GM23248 (cell line): ENCODE measurements at regions of chrX and their contacts with region 1.

Region 1: GRCh38 chrX:134753718-134754008 is 95.4 kb upstream of the PLAC1 start:
- DNase-seq: peak; percentile 59
- H3K4me3 ChIP-seq: peak overlapping the region; percentile 42; the same call in 1 of the 2 replicates
- H3K27ac ChIP-seq: no peak overlapping the region
- H3K4me1 ChIP-seq: no peaks in the 10 kb centered on the region; the same call in 1 of the 2 replicates
- H3K27me3 ChIP-seq: no peaks in the 10 kb centered on the region

Region 2: DNA sequence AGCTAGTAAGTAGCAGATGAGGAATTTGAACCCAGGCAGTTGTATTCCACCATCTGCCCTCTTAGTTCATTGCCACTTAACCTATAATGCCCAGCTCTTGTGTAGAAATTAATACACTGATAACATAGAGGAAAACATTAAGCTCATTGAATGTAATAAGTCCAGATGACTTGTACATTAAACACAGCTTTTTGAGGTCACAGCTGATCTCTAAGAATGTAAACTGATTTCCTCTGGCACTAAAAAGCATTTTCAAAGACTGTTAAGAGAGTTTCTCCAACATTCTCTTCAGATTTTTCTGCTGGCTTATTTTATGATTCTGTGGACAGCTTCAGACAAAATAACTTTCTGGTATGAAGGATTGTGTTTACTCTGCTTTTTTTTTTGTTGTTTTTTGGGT is 251.0 kb before region 1 on chrX:
- in situ Hi-C with region 1: loop called (anchors 10 kb)
- DNase-seq: no peak
- H3K4me3 ChIP-seq: no peak overlapping the region
- H3K27ac ChIP-seq: no peak overlapping the region
- H3K4me1 ChIP-seq: no peaks in the 10 kb centered on the region
- H3K27me3 ChIP-seq: no peaks in the 10 kb centered on the region

Region 3: GRCh38 chrX:135411893-135412292 is 658.2 kb after region 1 on chrX:
- in situ Hi-C with region 1: no loop called
- DNase-seq: peak; percentile 1
- H3K4me3 ChIP-seq: no peak overlapping the region
- H3K27ac ChIP-seq: no peak overlapping the region
- H3K4me1 ChIP-seq: no peaks in the 10 kb centered on the region
- H3K27me3 ChIP-seq: no peaks in the 10 kb centered on the region; the same call in 1 of the 2 replicates